Activated naive CD4-positive, alpha-beta T cell treated with anti-CD3 and anti-CD28 coated beads for 36 hours (primary cell): ENCODE measurements at regions of chr7 and their contacts with region 1.

Region 1: GRCh38 chr7:33757562-33758165 is 147.7 kb upstream of the BMPER start:
- DNase-seq: peak; percentile 50
- H3K4me3 Mint-ChIP-seq: no peak overlapping the region
- H3K27ac Mint-ChIP-seq: no peak overlapping the region
- H3K4me1 Mint-ChIP-seq: no peaks in the 10 kb centered on the region
- H3K27me3 Mint-ChIP-seq: no peaks in the 10 kb centered on the region

Region 2: DNA sequence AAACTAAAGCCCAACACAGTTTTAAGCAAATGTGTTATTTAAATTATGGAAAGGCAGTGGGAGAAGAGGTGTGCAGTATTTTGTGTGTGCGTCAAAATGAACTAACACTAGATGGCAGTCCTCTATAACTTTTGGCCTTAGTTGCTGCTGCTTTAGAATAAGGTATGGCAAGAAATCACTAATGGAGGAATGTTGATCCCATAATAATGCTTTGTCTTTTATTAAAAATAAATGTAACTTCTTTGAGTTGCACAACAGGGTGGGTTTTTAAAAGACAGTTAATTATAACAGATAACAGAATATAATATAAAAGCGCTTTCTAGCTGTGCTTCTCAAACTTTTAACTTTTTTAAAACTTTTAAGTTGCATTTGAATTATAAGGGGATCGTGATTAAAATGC is 571.9 kb before region 1 on chr7:
- CTCF ChIA-PET with region 1: no interaction called
- intact Hi-C with region 1: loop called (anchors 5 kb)
- DNase-seq: peak; percentile 15
- H3K4me3 Mint-ChIP-seq: no peak overlapping the region
- H3K27ac Mint-ChIP-seq: no peak overlapping the region
- H3K4me1 Mint-ChIP-seq: peaks cover 8% of the 10 kb centered on the region
- H3K27me3 Mint-ChIP-seq: no peaks in the 10 kb centered on the region

Region 3: GRCh38 chr7:33807779-33808482 is 50.3 kb after region 1 on chr7:
- CTCF ChIA-PET with region 1: interaction called, 15 read pairs
- intact Hi-C with region 1: loop called (anchors 1 kb)
- DNase-seq: peak; percentile 18
- H3K4me3 Mint-ChIP-seq: no peak overlapping the region
- H3K27ac Mint-ChIP-seq: no peak overlapping the region
- H3K4me1 Mint-ChIP-seq: no peaks in the 10 kb centered on the region
- H3K27me3 Mint-ChIP-seq: no peaks in the 10 kb centered on the region

Region 4: GRCh38 chr7:34247468-34247867 is 489.8 kb after region 1 on chr7:
- CTCF ChIA-PET with region 1: no interaction called
- intact Hi-C with region 1: no loop called
- DNase-seq: no peak
- H3K4me3 Mint-ChIP-seq: no peak overlapping the region
- H3K27ac Mint-ChIP-seq: no peak overlapping the region
- H3K4me1 Mint-ChIP-seq: no peaks in the 10 kb centered on the region
- H3K27me3 Mint-ChIP-seq: no peaks in the 10 kb centered on the region